ENCODE measurements at regions of chr9 and their contacts with region 1.

Region 1: GRCh38 chr9:99050292-99050911 is 54.5 kb upstream of the TGFBR1 start:
- DNase-seq: peak; percentile 86
- ATAC-seq: peak; percentile 89
- H3K4me3 ChIP-seq: no peak overlapping the region
- H3K27ac ChIP-seq: peak overlapping the region; percentile 99
- H3K4me1 ChIP-seq: peaks cover 62% of the 10 kb centered on the region
- H3K27me3 ChIP-seq: no peaks in the 10 kb centered on the region
- CTCF ChIP-seq: no peak

Region 2: DNA sequence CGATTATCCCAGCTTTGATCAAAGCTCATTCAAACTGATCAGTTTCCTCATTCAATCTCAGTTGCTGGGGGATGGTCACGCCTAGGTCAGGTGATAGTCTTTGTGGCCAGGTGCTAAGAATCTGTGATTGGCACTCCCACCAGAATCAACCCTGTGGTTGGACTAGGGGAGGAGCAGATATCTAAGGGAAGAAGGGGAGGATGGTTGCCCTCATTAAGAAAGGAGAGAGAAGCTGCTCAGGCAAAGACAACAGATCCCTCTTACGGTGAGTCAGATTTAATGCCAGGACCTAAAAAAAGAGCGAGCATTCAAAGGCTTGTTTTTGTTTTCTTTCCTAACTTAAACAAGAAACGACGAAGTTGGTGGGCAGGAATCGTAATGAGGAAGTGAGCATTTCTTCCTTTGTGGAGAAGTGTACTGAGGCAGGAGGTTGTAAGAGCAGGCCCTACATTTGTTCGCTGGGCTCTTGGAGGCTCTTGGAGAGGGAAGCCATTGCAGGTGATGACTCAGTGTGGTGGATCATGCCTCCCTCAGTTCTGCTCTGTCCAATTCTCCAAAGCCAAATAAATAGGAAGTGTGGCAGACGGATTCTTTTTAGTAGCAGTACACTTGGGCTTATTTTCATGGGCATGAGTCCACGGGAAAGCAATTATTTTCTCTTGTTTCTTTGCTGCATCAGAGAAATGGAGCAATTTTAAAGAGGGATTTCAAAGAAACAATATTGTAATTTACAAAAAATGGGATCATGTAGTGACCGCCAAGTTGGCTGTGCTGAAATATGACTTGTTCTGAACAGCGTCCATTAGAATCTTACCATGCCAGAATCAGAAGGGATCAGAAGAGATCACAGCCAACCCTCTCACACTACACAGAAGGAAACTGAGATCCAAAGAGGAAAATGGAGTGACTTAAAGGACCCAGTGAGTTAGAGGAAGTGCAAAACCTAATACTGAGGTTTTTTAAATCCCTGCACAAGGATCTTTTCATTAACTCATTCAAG is 35.8 kb after region 1 on chr9:
- CTCF ChIA-PET with region 1: no interaction called
- POLR2A ChIA-PET with region 1: no interaction called
- intact Hi-C with region 1: no loop called
- DNase-seq: no peak
- ATAC-seq: no peak
- H3K4me3 ChIP-seq: no peak overlapping the region
- H3K27ac ChIP-seq: no peak overlapping the region
- H3K4me1 ChIP-seq: no peaks in the 10 kb centered on the region
- H3K27me3 ChIP-seq: no peaks in the 10 kb centered on the region
- CTCF ChIP-seq: no peak

Region 3: GRCh38 chr9:99104459-99105151 is 54.2 kb after region 1 on chr9 and contains the start of gene TGFBR1:
- CTCF ChIA-PET with region 1: no interaction called
- POLR2A ChIA-PET with region 1: no interaction called
- intact Hi-C with region 1: loop called (anchors 2 kb)
- DNase-seq: peak; percentile 88
- ATAC-seq: peak; percentile 85
- H3K4me3 ChIP-seq: peak within 1 kb of the TSS; percentile 75
- H3K27ac ChIP-seq: peak within 1 kb of the TSS; percentile 63
- H3K4me1 ChIP-seq: peaks cover 13% of the 10 kb centered on the region
- H3K27me3 ChIP-seq: no peaks in the 10 kb centered on the region
- CTCF ChIP-seq: no peak
- total RNA-seq, gene TGFBR1: 9.5 and 13.2 TPM in 2 replicates

Region 4: GRCh38 chr9:99127376-99128132 is 77.2 kb after region 1 on chr9:
- CTCF ChIA-PET with region 1: no interaction called
- POLR2A ChIA-PET with region 1: no interaction called
- intact Hi-C with region 1: loop called (anchors 2 kb)
- DNase-seq: peak; percentile 71
- ATAC-seq: no peak
- H3K4me3 ChIP-seq: no peak overlapping the region
- H3K27ac ChIP-seq: peak overlapping the region; percentile 81
- H3K4me1 ChIP-seq: peaks cover 27% of the 10 kb centered on the region
- H3K27me3 ChIP-seq: no peaks in the 10 kb centered on the region
- CTCF ChIP-seq: no peak